ENCODE measurements at regions of chr12 and their contacts with region 1.

Region 1: GRCh38 chr12:4276524-4277204 is 3.1 kb downstream of the CCND2 start:
- DNase-seq: peak; percentile 64 to 65
- ATAC-seq: peak; percentile 62 to 68
- H3K4me3 ChIP-seq: no peak overlapping the region
- H3K27ac ChIP-seq: no peak overlapping the region
- H3K4me1 ChIP-seq: peaks cover 29 to 39% of the 10 kb centered on the region in 2 donors
- H3K27me3 ChIP-seq: peaks cover 50 to 57% (median 56%) of the 10 kb centered on the region in 3 donors
- CTCF ChIP-seq: peak; percentile 82 to 95 (median 88)
- POLR2A ChIP-seq: no peak

Region 2: GRCh38 chr12:3872800-3873636 is 403.6 kb before region 1 on chr12 and contains the start of gene PARP11:
- in situ Hi-C with region 1: loop called in 1 of 4 experiments (anchors 10 kb)
- intact Hi-C with region 1: loop called (anchors 5 kb)
- DNase-seq: peak; percentile 95 to 96
- ATAC-seq: peak; percentile 99
- H3K4me3 ChIP-seq: peak within 1 kb of the TSS; percentile 58 to 79 (median 72)
- H3K27ac ChIP-seq: peak within 1 kb of the TSS; percentile 87 to 95 (median 92)
- H3K4me1 ChIP-seq: peaks cover 9 to 21% of the 10 kb centered on the region in 2 donors
- H3K27me3 ChIP-seq: peaks cover 0 to 5% (median 0%) of the 10 kb centered on the region in 3 donors
- CTCF ChIP-seq: no peak
- POLR2A ChIP-seq: peak; percentile 34 to 43
- total RNA-seq, gene PARP11: 0.53 to 2.4 (median 1.2) TPM

Region 3: GRCh38 chr12:3896801-3897331 is 379.8 kb before region 1 on chr12:
- in situ Hi-C with region 1: loop called in 1 of 4 experiments (anchors 10 kb)
- intact Hi-C with region 1: no loop called
- DNase-seq: peak in 1 of 2 donors; percentile 24
- ATAC-seq: peak in 1 of 2 donors; percentile 24
- H3K4me3 ChIP-seq: no peak overlapping the region
- H3K27ac ChIP-seq: no peak overlapping the region
- H3K4me1 ChIP-seq: no peaks in the 10 kb centered on the region
- H3K27me3 ChIP-seq: peaks cover 0 to 4% (median 3%) of the 10 kb centered on the region in 3 donors
- CTCF ChIP-seq: no peak
- POLR2A ChIP-seq: no peak

Region 4: GRCh38 chr12:4030929-4031702 is 245.5 kb before region 1 on chr12:
- in situ Hi-C with region 1: loop called in 1 of 4 experiments (anchors 10 kb)
- intact Hi-C with region 1: loop called (anchors 5 kb)
- DNase-seq: peak; percentile 75 to 77
- ATAC-seq: peak; percentile 92 to 96
- H3K4me3 ChIP-seq: peak overlapping the region; percentile 53 to 65 (median 59)
- H3K27ac ChIP-seq: peak overlapping the region; percentile 42 to 65 (median 61)
- H3K4me1 ChIP-seq: peaks cover 0 to 3% of the 10 kb centered on the region in 2 donors
- H3K27me3 ChIP-seq: peaks cover 0 to 6% (median 0%) of the 10 kb centered on the region in 3 donors
- CTCF ChIP-seq: peak in 1 of 5 experiments; percentile 5
- POLR2A ChIP-seq: peak; percentile 46 to 66

Region 5: GRCh38 chr12:4118017-4118510 is 158.6 kb before region 1 on chr12:
- in situ Hi-C with region 1: loop called in 2 of 4 experiments (anchors 10 kb)
- intact Hi-C with region 1: no loop called
- DNase-seq: peak in 1 of 2 donors; percentile 26
- ATAC-seq: no peak
- H3K4me3 ChIP-seq: no peak overlapping the region
- H3K27ac ChIP-seq: no peak overlapping the region
- H3K4me1 ChIP-seq: no peaks in the 10 kb centered on the region
- H3K27me3 ChIP-seq: peaks cover 6 to 17% (median 9%) of the 10 kb centered on the region in 3 donors
- CTCF ChIP-seq: no peak
- POLR2A ChIP-seq: no peak